ENCODE measurements at regions of chr4 and their contacts with region 1.

Region 1: DNA sequence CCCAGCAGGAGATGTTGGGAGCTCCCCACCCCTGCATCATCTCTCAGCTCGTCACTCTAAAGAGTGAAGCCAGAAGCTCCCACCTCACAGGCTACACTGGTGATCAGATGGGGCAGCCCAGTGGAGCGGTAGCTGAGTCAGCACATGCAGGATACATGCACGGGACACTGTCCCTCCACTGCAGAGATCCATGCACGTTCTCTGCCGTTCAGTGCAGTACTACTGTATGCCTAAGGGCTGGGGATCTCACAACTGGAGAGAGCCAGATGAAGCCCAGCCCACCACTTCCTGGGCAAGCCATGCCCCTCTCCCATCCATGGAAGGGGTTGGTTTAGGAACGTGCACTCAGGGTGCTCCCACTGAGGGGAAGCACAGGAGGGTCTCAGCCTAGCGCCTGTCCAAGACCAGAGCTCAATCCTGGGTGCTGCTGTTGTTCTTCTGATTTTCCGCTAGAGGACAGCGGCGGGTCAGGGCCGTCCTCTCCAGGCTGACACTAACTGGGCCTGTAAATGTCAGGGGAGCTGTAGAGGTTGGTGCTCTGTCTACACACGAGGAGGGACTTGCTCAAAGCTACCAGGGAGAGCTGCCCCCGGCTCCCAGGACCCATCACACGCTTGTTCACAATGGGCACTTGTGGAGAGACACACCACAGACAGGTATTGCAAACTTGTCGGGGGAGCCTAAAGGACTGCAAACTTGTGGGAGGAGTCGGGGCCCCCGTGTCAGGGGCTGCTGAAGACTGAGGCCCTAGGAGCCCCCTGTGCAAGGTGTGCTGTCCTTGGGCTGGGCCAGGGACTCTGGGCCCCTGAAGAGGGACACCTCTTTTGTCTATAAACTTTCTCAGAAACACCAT is 18.2 kb upstream of the ABLIM2 start:
- DNase-seq: peak; percentile 70
- ATAC-seq: peak; percentile 80
- H3K4me3 ChIP-seq: no peak overlapping the region
- H3K4me3 Mint-ChIP-seq: no peak overlapping the region
- H3K27ac ChIP-seq: no peak overlapping the region
- H3K27ac Mint-ChIP-seq: no peak overlapping the region
- H3K4me1 ChIP-seq: peaks cover 15 to 23% of the 10 kb centered on the region in 2 donors
- H3K4me1 Mint-ChIP-seq: peaks cover 13% of the 10 kb centered on the region
- H3K27me3 ChIP-seq: no peaks in the 10 kb centered on the region
- H3K27me3 Mint-ChIP-seq: no peaks in the 10 kb centered on the region
- CTCF ChIP-seq: peak; percentile 83

Region 2: GRCh38 chr4:8117278-8117682 is 59.5 kb before region 1 on chr4:
- CTCF ChIA-PET with region 1: no interaction called
- POLR2A ChIA-PET with region 1: no interaction called
- intact Hi-C with region 1: no loop called
- DNase-seq: peak; percentile 40
- ATAC-seq: peak; percentile 82
- H3K4me3 ChIP-seq: no peak overlapping the region
- H3K4me3 Mint-ChIP-seq: no peak overlapping the region
- H3K27ac ChIP-seq: no peak overlapping the region
- H3K27ac Mint-ChIP-seq: no peak overlapping the region
- H3K4me1 ChIP-seq: no peaks in the 10 kb centered on the region
- H3K4me1 Mint-ChIP-seq: peaks cover 9% of the 10 kb centered on the region
- H3K27me3 ChIP-seq: no peaks in the 10 kb centered on the region
- H3K27me3 Mint-ChIP-seq: no peaks in the 10 kb centered on the region
- CTCF ChIP-seq: no peak

Region 3: DNA sequence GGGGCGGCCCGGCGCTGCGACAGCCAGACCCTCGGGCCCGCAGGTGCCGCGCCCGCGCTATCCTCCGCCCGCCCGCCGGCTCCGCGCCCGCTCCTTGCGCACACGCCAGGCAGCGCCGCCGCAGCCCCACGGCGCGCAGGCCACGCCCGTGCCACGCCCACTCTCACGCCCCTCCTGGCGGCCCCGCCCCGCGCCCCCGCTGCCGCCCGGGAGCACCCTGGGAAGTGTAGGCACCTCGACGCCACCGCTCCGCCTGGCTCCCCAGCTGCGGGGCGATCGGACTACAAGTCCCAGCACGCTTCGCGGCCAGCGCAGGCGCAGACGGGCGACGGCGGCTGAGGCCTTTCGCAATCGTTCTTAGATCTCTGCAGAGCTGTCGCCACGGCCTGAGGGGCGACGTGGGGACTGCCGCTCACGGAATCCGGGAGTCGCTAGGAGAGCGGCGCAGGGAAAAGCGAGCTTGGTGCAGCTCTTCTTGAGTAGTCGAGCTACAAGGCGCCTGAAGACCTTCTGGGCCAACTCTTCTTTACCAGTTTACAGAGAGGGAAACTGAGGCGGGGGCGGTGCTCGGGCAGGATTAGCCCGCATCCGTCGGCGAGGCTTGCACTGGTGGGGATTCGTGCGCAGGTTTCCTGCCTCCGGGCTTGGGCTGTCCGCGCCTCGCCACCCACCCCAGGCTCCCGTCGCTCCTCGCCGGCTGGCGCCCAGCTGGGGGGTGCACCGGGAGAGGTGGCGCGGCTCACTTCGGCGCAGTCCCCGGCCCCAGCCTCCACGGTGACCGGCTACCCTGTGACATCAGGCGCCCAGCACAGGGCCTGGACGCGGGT is 17.9 kb before region 1 on chr4 and contains the start of gene ABLIM2:
- CTCF ChIA-PET with region 1: interaction called, 39 read pairs
- POLR2A ChIA-PET with region 1: interaction called, 31 read pairs
- intact Hi-C with region 1: loop called (anchors 1 kb)
- DNase-seq: peak; percentile 98
- ATAC-seq: peak; percentile 91
- H3K4me3 ChIP-seq: peak within 1 kb of the TSS; percentile 77 to 99 (median 95)
- H3K4me3 Mint-ChIP-seq: peak within 1 kb of the TSS; percentile 94
- H3K27ac ChIP-seq: peak within 1 kb of the TSS; percentile 35 to 41
- H3K27ac Mint-ChIP-seq: peak within 1 kb of the TSS; percentile 87
- H3K4me1 ChIP-seq: peaks cover 44 to 59% of the 10 kb centered on the region in 2 donors
- H3K4me1 Mint-ChIP-seq: peaks cover 44% of the 10 kb centered on the region
- H3K27me3 ChIP-seq: peaks cover 0 to 19% (median 10%) of the 10 kb centered on the region in 4 experiments
- H3K27me3 Mint-ChIP-seq: peaks cover 12% of the 10 kb centered on the region
- CTCF ChIP-seq: no peak
- total RNA-seq, gene ABLIM2: 68.3 and 79.0 TPM in 2 replicates

Region 4: GRCh38 chr4:8198906-8199593 is 22.3 kb after region 1 on chr4 and contains the start of gene SH3TC1:
- CTCF ChIA-PET with region 1: interaction called, 127 read pairs
- POLR2A ChIA-PET with region 1: interaction called, 13 read pairs
- intact Hi-C with region 1: no loop called
- DNase-seq: peak; percentile 87
- ATAC-seq: peak; percentile 63
- H3K4me3 ChIP-seq: peak within 1 kb of the TSS; percentile 39 to 96 (median 85)
- H3K4me3 Mint-ChIP-seq: peak within 1 kb of the TSS; percentile 100
- H3K27ac ChIP-seq: peak within 1 kb of the TSS; percentile 80 to 91
- H3K27ac Mint-ChIP-seq: peak within 1 kb of the TSS; percentile 100
- H3K4me1 ChIP-seq: peaks cover 41 to 56% of the 10 kb centered on the region in 2 donors
- H3K4me1 Mint-ChIP-seq: peaks cover 60% of the 10 kb centered on the region
- H3K27me3 ChIP-seq: no peaks in the 10 kb centered on the region
- H3K27me3 Mint-ChIP-seq: no peaks in the 10 kb centered on the region
- CTCF ChIP-seq: no peak
- total RNA-seq, gene SH3TC1: 388 and 396 TPM in 2 replicates

Region 5: GRCh38 chr4:8228319-8229250 is 51.8 kb after region 1 on chr4:
- CTCF ChIA-PET with region 1: interaction called, 14 read pairs
- POLR2A ChIA-PET with region 1: interaction called, 5 read pairs
- intact Hi-C with region 1: loop called (anchors 2 kb)
- DNase-seq: peak; percentile 75
- ATAC-seq: peak; percentile 73
- H3K4me3 ChIP-seq: peak overlapping the region in 1 of 5 experiments; percentile 14
- H3K4me3 Mint-ChIP-seq: peak overlapping the region; percentile 74
- H3K27ac ChIP-seq: peak overlapping the region; percentile 68 to 73
- H3K27ac Mint-ChIP-seq: peak overlapping the region; percentile 92
- H3K4me1 ChIP-seq: peaks cover 17 to 41% of the 10 kb centered on the region in 2 donors
- H3K4me1 Mint-ChIP-seq: peaks cover 39% of the 10 kb centered on the region
- H3K27me3 ChIP-seq: no peaks in the 10 kb centered on the region
- H3K27me3 Mint-ChIP-seq: no peaks in the 10 kb centered on the region
- CTCF ChIP-seq: no peak

Region 6: DNA sequence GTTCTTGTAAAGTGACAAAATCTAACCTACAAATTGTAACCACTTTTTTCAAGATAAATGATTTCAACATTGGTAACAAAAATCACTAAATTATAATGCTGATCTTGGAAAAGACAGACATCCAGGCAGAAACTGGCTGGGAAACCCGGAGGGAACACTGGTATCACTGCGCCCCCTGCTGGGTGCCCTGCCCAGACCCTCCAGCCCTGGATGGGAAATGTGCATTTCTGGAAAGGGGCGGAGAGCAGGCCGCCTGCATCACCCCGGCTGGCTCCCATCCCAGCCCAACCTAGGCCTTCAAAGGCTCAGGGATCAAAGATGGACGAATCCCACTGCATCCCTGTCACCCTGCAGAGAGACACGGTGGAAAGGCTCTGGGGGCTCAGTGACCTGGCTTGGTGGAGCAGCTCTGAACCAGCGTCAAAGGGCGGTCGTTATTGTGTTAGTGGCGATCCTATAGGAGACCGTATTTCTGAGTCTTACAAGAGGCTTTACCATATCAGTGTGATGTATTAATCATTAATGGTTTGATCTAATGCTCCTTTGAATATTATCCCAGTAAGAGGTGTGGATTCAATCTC is 226.5 kb after region 1 on chr4:
- CTCF ChIA-PET with region 1: interaction called, 48 read pairs
- POLR2A ChIA-PET with region 1: no interaction called
- intact Hi-C with region 1: no loop called
- DNase-seq: peak; percentile 56
- ATAC-seq: peak; percentile 53
- H3K4me3 ChIP-seq: no peak overlapping the region
- H3K4me3 Mint-ChIP-seq: no peak overlapping the region
- H3K27ac ChIP-seq: no peak overlapping the region
- H3K27ac Mint-ChIP-seq: no peak overlapping the region
- H3K4me1 ChIP-seq: no peaks in the 10 kb centered on the region
- H3K4me1 Mint-ChIP-seq: peaks cover 2% of the 10 kb centered on the region
- H3K27me3 ChIP-seq: no peaks in the 10 kb centered on the region
- H3K27me3 Mint-ChIP-seq: no peaks in the 10 kb centered on the region
- CTCF ChIP-seq: peak; percentile 89

Measured in B cell (primary cell).